Activated T-helper 1 cell treated with anti-CD3 and anti-CD28 coated beads, Interleukin-12 subunit alpha, Interleukin-12 subunit beta, Interleukin-2, Interleukin-4 antibody, amounts not matched to agents 30 ng/mL and 10 ng/mL and 1 ng/mL, durations not matched to agents 14 hours and 24 hours and 36 hours (primary cell): ENCODE measurements at regions of chr3 and their contacts with region 1.

Region 1: DNA sequence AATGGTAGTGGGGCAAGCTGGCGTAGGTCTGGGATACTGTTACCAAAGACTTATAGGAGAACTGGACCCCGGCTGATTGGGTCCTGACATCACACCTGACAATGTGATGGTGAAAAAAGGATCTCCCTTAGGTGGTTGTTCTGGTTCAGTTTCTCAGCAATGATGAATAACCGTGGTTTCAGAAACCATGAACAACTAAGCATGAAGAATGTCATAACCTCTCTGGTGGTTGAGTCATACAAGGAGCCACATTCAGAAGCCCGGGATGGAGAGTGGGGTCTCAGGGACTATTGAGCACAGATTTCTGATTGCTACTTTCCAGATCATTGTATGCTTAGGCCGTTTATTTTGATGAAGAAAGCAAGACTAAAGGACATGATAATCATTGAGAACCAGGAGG is 17.4 kb downstream of the GPR160 start:
- DNase-seq: no peak
- H3K4me3 Mint-ChIP-seq: no peak overlapping the region
- H3K27ac Mint-ChIP-seq: no peak overlapping the region
- H3K4me1 Mint-ChIP-seq: peaks cover 43% of the 10 kb centered on the region
- H3K27me3 Mint-ChIP-seq: no peaks in the 10 kb centered on the region

Region 2: GRCh38 chr3:169863458-169863899 is 191.7 kb before region 1 on chr3:
- intact Hi-C with region 1: loop called (anchors 1 kb)
- DNase-seq: peak; percentile 44
- H3K4me3 Mint-ChIP-seq: no peak overlapping the region
- H3K27ac Mint-ChIP-seq: no peak overlapping the region
- H3K4me1 Mint-ChIP-seq: peaks cover 24% of the 10 kb centered on the region
- H3K27me3 Mint-ChIP-seq: peaks cover 25% of the 10 kb centered on the region

Region 3: GRCh38 chr3:169998568-169999131 is 56.6 kb before region 1 on chr3:
- intact Hi-C with region 1: loop called (anchors 2 kb)
- DNase-seq: no peak
- H3K4me3 Mint-ChIP-seq: no peak overlapping the region
- H3K27ac Mint-ChIP-seq: peak overlapping the region; percentile 67
- H3K4me1 Mint-ChIP-seq: peaks cover 26% of the 10 kb centered on the region
- H3K27me3 Mint-ChIP-seq: no peaks in the 10 kb centered on the region

Region 4: GRCh38 chr3:170257145-170257544 is 201.9 kb after region 1 on chr3:
- intact Hi-C with region 1: loop called (anchors 5 kb)
- DNase-seq: no peak
- H3K4me3 Mint-ChIP-seq: no peak overlapping the region
- H3K27ac Mint-ChIP-seq: peak overlapping the region; percentile 72
- H3K4me1 Mint-ChIP-seq: peaks cover 34% of the 10 kb centered on the region
- H3K27me3 Mint-ChIP-seq: no peaks in the 10 kb centered on the region